ENCODE measurements at regions of chr9 and their contacts with region 1.

Region 1: DNA sequence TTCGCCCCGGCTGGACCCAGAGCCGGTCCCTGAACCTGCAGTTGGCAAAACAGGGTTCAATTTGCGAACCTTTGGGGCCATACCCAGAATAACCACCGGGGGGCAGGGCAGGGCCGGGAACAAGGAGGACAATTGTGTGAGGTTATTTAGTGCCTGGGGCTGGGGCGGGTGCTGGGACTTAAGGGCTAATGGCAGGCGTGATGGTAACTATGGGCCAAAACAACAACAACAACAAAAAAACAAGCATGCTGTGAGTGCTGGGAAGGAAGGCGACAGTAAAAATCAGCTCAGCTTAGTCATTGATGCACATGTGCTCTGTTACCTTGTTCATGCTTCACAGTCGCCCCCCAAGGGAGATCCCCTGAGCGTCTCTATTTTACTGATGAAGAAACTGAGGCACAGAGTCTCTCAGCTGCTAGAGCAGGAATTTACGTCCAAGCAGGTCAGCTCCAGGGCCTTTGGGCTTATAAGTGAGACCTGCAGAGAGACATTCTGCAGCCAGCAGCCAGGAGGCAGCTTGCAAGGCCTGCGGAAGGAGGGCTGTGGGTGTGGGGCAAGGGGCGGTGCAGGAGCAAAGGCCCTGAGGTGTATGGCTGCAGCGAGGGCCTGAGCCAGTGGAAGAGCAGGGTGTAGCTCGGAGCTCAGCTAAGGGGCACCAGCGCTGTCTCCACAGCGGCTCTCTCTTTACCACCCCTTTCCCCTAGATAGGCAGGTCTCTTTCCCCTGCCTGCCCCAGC is 106.0 kb downstream of the PHF2 start:
- DNase-seq: peak; percentile 73

Region 2: DNA sequence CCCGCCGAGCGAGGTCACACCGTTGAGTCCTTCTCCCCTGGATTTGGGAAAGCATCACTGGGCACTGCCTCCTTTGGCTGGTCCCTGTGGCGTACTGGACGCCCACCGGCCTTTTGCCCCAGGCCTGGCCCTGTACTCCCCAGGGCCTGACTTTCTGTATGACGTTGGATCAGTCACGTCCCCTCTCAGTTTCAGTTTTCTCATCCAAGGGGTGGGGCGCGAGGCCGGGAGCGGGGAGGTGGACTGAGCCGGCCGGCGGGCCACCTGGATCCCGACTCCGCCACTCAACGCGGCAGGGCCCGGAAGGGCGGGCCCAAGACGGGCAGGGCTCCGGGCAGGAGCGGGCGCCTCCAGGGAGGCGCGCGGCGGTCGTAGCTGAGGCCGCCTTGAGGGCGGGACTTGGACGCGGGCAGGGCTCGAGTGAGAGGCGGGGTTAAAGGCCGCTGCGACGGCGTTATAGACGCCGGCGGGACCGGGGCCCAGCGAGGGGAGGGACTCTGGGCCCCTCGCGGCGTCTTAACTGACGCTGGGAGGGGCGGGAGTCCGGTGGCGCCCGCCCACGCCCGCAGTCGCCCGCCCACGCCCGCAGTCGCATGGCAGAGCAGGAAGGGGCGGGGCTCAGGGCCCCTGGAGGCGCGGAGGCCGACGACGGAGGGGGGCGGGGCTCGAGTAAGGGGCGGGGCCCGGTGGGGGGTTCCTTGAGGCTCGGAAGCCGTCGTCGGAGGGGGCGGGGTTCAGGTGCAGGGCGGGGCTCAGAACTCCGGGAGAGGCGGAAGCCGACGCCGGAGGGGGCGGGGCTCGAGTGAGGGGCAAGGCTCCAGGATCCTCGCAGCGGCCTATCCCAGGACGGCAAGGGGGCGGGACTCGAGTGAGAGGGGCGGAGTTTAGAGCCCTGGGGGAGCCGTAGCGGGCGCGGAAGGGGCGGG is 586.9 kb before region 1 on chr9:
- in situ Hi-C with region 1: no loop called
- DNase-seq: peak; percentile 98

Region 3: GRCh38 chr9:93464395-93464794 is 218.0 kb before region 1 on chr9:
- in situ Hi-C with region 1: no loop called
- DNase-seq: peak; percentile 38

Region 4: GRCh38 chr9:93575796-93576257 is 106.6 kb before region 1 on chr9:
- in situ Hi-C with region 1: loop called (anchors 25 kb)
- DNase-seq: peak; percentile 86

Region 5: GRCh38 chr9:93962561-93963440 is 280.4 kb after region 1 on chr9:
- in situ Hi-C with region 1: loop called (anchors 10 kb)
- DNase-seq: peak; percentile 88

Region 6: GRCh38 chr9:94213511-94214124 is 531.2 kb after region 1 on chr9:
- in situ Hi-C with region 1: loop called (anchors 25 kb)
- DNase-seq: peak; percentile 82

Measured in KBM-7 (cell line).